MCF 10A (cell line): ENCODE measurements at regions of chr3 and their contacts with region 1.

Region 1: DNA sequence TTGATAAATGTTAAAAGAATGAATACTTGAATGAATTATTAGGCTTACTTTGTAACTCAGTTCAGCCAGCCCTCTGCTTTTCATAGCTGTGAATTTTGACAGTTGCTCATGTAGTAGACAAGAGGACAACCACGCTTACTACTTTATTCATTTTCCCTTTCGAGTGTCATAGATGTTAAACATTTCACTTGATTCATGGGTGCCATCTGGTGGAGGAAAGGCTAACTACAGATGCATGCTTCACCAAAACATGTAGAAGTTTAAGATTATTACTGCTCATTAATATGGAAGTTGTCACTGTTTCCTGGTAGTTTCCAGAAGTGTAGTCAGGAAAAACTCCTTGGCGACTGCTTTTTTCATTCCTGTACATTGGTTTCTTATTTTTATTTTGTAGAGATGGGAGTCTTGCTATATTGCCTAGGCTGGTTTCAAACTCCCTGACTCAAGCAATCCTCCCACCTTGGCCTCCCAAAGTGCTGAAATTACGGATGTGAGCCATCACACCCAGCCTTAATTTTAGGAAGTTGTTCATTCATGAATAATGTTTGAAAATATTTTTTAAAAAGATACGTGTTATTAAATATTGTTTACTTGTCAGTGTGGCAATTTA is 163.2 kb downstream of the B3GALNT1 start:
- DNase-seq: peak; percentile 84
- H3K4me3 Mint-ChIP-seq: no peak overlapping the region
- H3K27ac Mint-ChIP-seq: no peak overlapping the region
- H3K4me1 Mint-ChIP-seq: no peaks in the 10 kb centered on the region
- H3K27me3 Mint-ChIP-seq: no peaks in the 10 kb centered on the region
- CTCF ChIP-seq: peak; percentile 89

Region 2: GRCh38 chr3:160643994-160644393 is 298.0 kb before region 1 on chr3:
- CTCF ChIA-PET with region 1: interaction called, 3 read pairs
- POLR2A ChIA-PET with region 1: no interaction called
- intact Hi-C with region 1: loop called (anchors 1 kb)
- DNase-seq: peak; percentile 34
- H3K4me3 Mint-ChIP-seq: no peak overlapping the region
- H3K27ac Mint-ChIP-seq: no peak overlapping the region
- H3K4me1 Mint-ChIP-seq: peaks cover 6% of the 10 kb centered on the region
- H3K27me3 Mint-ChIP-seq: no peaks in the 10 kb centered on the region
- CTCF ChIP-seq: peak; percentile 22

Region 3: DNA sequence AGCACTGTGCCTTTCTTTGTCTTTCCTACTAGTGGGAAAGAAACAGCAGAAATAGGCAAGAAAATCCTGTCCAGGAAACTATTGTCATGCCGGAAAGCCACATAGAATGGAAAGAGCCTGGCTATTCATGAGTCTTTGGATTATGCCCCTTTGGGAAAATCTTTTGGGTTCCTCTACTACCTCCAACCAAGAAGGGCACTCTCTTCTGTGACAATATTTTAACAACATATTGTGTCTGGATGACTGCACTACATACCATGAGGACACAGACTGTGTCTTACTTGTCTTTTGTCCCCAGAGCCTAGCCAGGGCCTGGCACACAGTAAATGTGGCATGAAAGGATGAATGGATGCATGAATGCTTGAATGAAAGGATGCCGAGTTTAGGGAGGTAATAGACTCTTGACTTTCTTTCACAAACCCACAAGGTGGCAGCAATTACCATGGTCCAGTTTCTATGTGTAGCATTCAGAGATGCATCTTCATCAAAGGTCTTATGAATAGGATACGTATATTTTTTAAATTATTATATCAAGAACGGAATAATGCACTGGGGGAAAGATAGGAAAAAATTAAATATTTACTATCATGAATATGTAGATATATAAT is 234.7 kb before region 1 on chr3:
- CTCF ChIA-PET with region 1: interaction called, 93 read pairs
- POLR2A ChIA-PET with region 1: interaction called, 5 read pairs
- intact Hi-C with region 1: loop called (anchors 1 kb)
- DNase-seq: peak; percentile 65
- H3K4me3 Mint-ChIP-seq: no peak overlapping the region
- H3K27ac Mint-ChIP-seq: no peak overlapping the region
- H3K4me1 Mint-ChIP-seq: no peaks in the 10 kb centered on the region
- H3K27me3 Mint-ChIP-seq: peaks cover 20% of the 10 kb centered on the region
- CTCF ChIP-seq: peak; percentile 54

Region 4: GRCh38 chr3:160841455-160841854 is 100.5 kb before region 1 on chr3:
- CTCF ChIA-PET with region 1: interaction called, 19 read pairs
- POLR2A ChIA-PET with region 1: no interaction called
- intact Hi-C with region 1: no loop called
- DNase-seq: no peak
- H3K4me3 Mint-ChIP-seq: no peak overlapping the region
- H3K27ac Mint-ChIP-seq: no peak overlapping the region
- H3K4me1 Mint-ChIP-seq: no peaks in the 10 kb centered on the region
- H3K27me3 Mint-ChIP-seq: no peaks in the 10 kb centered on the region
- CTCF ChIP-seq: no peak

Region 5: DNA sequence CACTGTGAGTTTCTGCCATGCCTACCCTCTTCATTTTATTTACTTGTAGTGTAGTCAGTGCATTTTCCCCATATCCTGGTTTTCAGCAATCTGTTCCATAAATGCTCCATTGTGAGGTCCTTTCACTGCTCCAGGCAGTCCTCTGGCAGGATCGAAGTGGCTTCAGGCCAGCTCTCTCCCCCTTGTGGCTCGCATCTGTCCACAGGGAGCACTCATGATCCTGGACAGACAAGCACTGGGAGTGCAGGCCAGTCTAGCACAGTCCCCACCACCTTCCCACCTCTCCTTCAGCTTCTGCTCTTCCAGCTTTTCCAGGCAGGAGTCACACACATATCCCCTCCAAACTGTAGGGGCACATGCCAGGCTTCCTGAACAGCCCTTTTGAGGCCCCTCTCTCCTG is 12.4 kb before region 1 on chr3:
- CTCF ChIA-PET with region 1: interaction called, 44 read pairs
- POLR2A ChIA-PET with region 1: interaction called, 4 read pairs
- intact Hi-C with region 1: no loop called
- DNase-seq: peak; percentile 32
- H3K4me3 Mint-ChIP-seq: no peak overlapping the region
- H3K27ac Mint-ChIP-seq: no peak overlapping the region
- H3K4me1 Mint-ChIP-seq: no peaks in the 10 kb centered on the region
- H3K27me3 Mint-ChIP-seq: no peaks in the 10 kb centered on the region
- CTCF ChIP-seq: no peak